ENCODE measurements at regions of chr2 and their contacts with region 1.

Region 1: GRCh38 chr2:88950010-88950409 is 258.5 kb downstream of the RPIA start:
- DNase-seq: no peak
- ATAC-seq: no peak
- H3K4me3 ChIP-seq: no peak overlapping the region
- H3K27ac ChIP-seq: no peak overlapping the region
- H3K4me1 ChIP-seq: no peaks in the 10 kb centered on the region
- H3K27me3 ChIP-seq: peaks cover 0 to 12% (median 0%) of the 10 kb centered on the region in 9 donors
- CTCF ChIP-seq: peak in 5 of 12 donors; percentile 9 to 34 (median 27)
- POLR2A ChIP-seq: no peak

Region 2: DNA sequence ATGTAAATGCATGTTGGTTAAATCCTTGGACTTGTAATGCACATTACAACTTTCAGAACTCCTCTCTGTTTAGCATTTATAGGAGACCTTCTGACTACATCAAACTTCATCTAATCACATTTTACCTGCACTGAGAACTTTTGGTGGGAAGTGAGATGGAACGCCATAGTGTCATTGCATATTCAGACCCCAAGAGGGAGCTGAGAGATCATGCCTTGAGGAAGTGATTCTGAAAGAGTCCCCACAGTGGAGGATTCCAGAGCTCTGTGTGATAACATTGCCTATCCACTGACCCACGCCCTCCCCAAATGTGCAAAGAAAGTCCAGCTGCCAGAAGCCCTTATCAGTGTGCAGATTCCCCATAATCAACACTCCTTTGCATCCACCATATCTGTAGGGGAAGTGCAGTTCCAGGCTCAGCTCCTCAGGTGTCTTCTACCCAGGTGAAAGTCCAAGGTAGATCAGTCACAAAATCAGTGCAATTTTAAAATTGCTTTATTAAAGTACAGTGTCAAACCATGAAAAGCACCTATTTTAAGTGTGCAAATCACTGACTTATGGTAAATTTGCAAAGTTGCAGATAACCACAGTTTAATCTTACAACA is 46.2 kb before region 1 on chr2:
- intact Hi-C with region 1: loop called in 1 of 10 experiments (anchors 10 kb)
- DNase-seq: no peak
- ATAC-seq: peak in 3 of 4 donors; percentile 48 to 81 (median 64)
- H3K4me3 ChIP-seq: no peak overlapping the region
- H3K27ac ChIP-seq: no peak overlapping the region
- H3K4me1 ChIP-seq: no peaks in the 10 kb centered on the region
- H3K27me3 ChIP-seq: peaks cover 0 to 39% (median 10%) of the 10 kb centered on the region in 9 donors
- CTCF ChIP-seq: peak; percentile 49 to 77 (median 68)
- POLR2A ChIP-seq: no peak